Thyroid gland (tissue), 4 donors: ENCODE measurements at regions of chr2 and their contacts with region 1.

Region 1: DNA sequence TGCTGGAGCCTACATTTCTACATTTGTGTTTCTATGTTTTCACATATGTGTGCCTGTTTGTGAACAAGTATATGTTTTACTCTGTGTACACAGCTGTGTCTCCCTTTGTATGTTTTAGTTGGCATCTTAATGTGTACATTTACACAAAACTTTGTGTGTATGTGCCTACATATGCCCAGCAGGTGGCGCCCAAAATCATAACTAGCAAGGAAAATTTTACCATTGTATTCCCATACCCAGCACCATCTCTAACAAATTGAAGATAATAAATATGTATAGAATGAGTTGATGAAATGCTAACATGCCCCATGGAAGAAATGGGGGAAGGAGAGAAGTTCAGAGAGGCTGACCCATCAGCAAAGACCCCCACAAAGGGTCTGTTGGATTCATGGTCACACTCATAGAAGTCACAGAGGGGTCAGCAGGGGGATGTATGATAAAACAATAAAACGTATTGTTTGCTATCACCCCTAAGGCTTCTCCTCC is 48.1 kb downstream of the PKDCC start:
- DNase-seq: peak; percentile 76 to 85
- H3K4me3 ChIP-seq: no peak overlapping the region
- H3K27ac ChIP-seq: no peak overlapping the region
- H3K4me1 ChIP-seq: peaks cover 0 to 15% of the 10 kb centered on the region in 2 donors
- H3K27me3 ChIP-seq: no peaks in the 10 kb centered on the region
- CTCF ChIP-seq: peak; percentile 50 to 94 (median 82)
- POLR2A ChIP-seq: no peak

Region 2: DNA sequence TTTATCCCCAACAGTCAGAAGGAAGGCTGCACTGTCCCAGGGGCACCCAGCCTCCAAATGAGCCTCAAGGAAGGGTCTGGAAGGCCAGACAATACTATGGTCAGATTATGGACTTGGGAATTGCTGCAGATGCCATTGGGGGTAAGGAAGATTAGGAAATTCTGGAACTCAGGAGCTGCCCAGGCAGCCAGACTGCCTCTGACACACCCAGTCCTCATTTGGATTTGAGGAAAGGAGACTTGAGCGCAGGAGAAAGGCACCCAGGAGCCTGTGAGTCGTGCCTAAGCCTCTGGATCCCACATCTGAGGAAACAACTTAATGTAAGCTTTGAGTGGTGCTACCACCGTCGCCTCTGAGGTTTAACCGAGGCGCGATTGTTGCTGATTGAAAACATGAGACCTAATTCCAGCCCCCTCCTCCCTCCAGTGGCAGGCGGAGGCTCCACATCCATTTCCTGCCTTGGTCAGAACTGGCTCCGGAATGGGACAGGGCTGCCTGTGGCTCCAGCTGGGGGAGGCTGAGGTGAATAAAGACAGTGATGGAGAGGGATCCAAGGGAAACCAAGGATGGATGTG is 224.9 kb before region 1 on chr2:
- intact Hi-C with region 1: no loop called
- DNase-seq: no peak
- H3K4me3 ChIP-seq: no peak overlapping the region
- H3K27ac ChIP-seq: no peak overlapping the region
- H3K4me1 ChIP-seq: no peaks in the 10 kb centered on the region
- H3K27me3 ChIP-seq: no peaks in the 10 kb centered on the region
- CTCF ChIP-seq: peak in 1 of 6 experiments; percentile 11
- POLR2A ChIP-seq: no peak

Region 3: GRCh38 chr2:41886757-41887156 is 209.2 kb before region 1 on chr2:
- intact Hi-C with region 1: no loop called
- DNase-seq: no peak
- H3K4me3 ChIP-seq: no peak overlapping the region
- H3K27ac ChIP-seq: no peak overlapping the region
- H3K4me1 ChIP-seq: no peaks in the 10 kb centered on the region
- H3K27me3 ChIP-seq: no peaks in the 10 kb centered on the region
- CTCF ChIP-seq: no peak
- POLR2A ChIP-seq: no peak

Region 4: GRCh38 chr2:42244520-42244919 is 148.6 kb after region 1 on chr2:
- intact Hi-C with region 1: loop called (anchors 5 kb)
- DNase-seq: no peak
- H3K4me3 ChIP-seq: no peak overlapping the region
- H3K27ac ChIP-seq: no peak overlapping the region
- H3K4me1 ChIP-seq: peaks cover 0 to 10% of the 10 kb centered on the region in 2 donors
- H3K27me3 ChIP-seq: no peaks in the 10 kb centered on the region
- CTCF ChIP-seq: no peak
- POLR2A ChIP-seq: no peak

Region 5: GRCh38 chr2:42339191-42339912 is 243.4 kb after region 1 on chr2:
- intact Hi-C with region 1: loop called (anchors 10 kb)
- DNase-seq: peak in 1 of 2 donors; percentile 35
- H3K4me3 ChIP-seq: no peak overlapping the region
- H3K27ac ChIP-seq: no peak overlapping the region
- H3K4me1 ChIP-seq: peaks cover 17 to 18% of the 10 kb centered on the region in 2 donors
- H3K27me3 ChIP-seq: no peaks in the 10 kb centered on the region
- CTCF ChIP-seq: peak in 1 of 6 experiments; percentile 6
- POLR2A ChIP-seq: no peak

Region 6: DNA sequence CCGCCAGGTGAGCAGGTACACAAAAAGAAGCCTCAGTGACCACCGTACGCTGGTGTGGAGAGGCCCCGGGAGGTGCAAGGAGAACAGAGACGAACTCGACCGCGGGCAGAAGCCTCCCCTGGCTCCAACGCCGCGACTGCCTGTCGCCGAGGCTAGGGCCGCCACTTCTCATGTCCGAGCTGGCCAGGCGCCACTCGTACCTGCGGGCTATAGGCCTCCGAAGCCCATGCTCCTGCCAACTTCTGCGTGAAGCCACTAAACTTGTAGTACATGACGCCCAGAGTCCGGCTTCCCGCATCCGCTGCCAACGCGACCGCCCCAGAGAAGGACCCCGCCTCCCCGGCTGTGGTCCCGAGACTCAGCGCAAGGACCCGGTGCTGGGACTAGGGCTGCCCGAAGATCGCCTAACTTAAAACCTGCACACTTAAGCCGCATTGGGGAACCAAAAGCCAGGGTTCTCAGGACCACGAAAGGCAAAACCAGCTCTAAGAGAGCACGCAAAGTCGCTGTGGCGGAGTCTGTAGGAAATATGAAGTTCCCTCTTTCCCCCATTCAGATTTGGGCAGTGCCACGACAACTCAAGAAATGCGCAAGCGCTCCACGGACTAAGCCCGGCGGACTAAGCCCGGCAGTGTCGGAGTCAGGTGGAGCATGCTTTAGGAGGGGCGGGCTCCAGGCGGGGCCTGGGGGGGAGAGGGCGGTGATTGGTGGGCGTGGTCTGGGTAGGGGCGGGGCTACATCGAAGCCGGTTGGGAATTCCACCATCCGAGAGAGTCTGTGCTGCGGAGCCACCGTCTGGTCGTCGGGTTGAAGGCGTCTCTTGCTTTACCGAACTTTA is 265.1 kb after region 1 on chr2 and contains the start of gene COX7A2L:
- intact Hi-C with region 1: loop called (anchors 10 kb)
- DNase-seq: peak; percentile 95 to 97
- H3K4me3 ChIP-seq: peak within 1 kb of the TSS; percentile 59 to 94 (median 77)
- H3K27ac ChIP-seq: peak within 1 kb of the TSS; percentile 88 to 98 (median 93)
- H3K4me1 ChIP-seq: peaks cover 3 to 14% of the 10 kb centered on the region in 2 donors
- H3K27me3 ChIP-seq: no peaks in the 10 kb centered on the region
- CTCF ChIP-seq: peak in 3 of 6 experiments; percentile 2 to 40 (median 32)
- POLR2A ChIP-seq: peak; percentile 28 to 65
- total RNA-seq, gene COX7A2L: 98.7 to 129 (median 119) TPM